ENCODE measurements at regions of chr4 and their contacts with region 1.

Region 1: GRCh38 chr4:85968945-85969819 is 390.7 kb downstream of the MAPK10 start:
- DNase-seq: no peak
- H3K4me3 ChIP-seq: no peak overlapping the region
- H3K27ac ChIP-seq: no peak overlapping the region
- H3K4me1 ChIP-seq: no peaks in the 10 kb centered on the region
- H3K27me3 ChIP-seq: no peaks in the 10 kb centered on the region
- CTCF ChIP-seq: peak; percentile 63

Region 2: DNA sequence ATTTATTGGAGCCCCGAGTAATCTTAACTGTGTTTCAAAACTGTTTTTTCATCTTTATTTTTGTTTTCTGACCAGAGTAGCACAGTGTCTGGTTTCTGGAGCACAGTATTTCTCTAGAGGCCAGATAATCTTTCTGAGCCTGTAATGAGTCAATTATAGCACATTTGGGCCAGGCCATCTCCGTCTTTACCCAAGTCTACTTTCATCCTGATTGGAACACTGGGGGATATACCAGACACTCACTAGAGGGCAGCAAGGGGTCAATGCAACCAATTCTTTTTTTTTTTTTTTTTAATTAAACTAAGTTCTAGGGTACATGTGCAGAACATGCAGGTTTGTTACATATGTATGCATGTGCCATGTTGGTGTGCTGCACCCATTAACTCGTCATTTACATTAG is 212.2 kb before region 1 on chr4:
- CTCF ChIA-PET with region 1: no interaction called
- POLR2A ChIA-PET with region 1: no interaction called
- intact Hi-C with region 1: loop called (anchors 1 kb)
- DNase-seq: no peak
- H3K4me3 ChIP-seq: no peak overlapping the region
- H3K27ac ChIP-seq: no peak overlapping the region
- H3K4me1 ChIP-seq: no peaks in the 10 kb centered on the region
- H3K27me3 ChIP-seq: no peaks in the 10 kb centered on the region
- CTCF ChIP-seq: peak; percentile 50

Region 3: DNA sequence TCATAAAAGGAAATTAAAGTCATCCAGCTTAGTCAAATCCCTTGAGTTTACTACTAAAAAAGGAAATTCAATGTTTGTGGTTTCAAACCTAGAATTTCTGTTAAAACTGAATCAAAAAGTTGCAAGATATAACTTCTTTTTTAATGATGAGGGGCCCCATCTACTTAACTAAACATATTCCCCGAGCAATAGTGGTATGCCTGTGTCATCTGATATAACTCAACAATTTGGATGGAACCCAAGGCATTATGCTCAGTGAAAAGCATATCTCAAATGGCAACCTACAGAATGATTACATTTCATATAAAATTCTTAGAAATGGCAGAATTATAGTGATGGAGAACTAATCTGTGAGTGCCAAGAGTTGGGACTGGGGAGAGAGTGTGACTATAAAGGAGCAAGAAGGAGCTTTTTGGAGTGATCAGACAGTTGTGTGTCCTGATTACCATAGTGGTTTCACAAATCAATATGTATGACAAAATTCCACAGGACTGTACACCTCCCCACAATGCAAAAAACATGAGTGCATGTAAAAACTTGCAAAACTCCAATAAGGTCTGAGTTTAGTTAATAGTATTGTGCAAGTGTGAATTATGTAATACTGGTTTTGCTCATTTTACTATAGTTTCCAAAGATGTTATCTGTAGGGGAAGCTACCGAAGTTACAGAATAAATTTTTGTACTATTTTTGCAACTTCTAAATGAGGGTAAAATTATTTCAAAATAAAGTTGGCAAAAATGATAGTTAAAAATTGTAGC is 171.0 kb before region 1 on chr4:
- CTCF ChIA-PET with region 1: interaction called, 15 read pairs
- POLR2A ChIA-PET with region 1: no interaction called
- intact Hi-C with region 1: loop called (anchors 1 kb)
- DNase-seq: no peak
- H3K4me3 ChIP-seq: no peak overlapping the region
- H3K27ac ChIP-seq: no peak overlapping the region
- H3K4me1 ChIP-seq: no peaks in the 10 kb centered on the region; the same call in 1 of the 2 replicates
- H3K27me3 ChIP-seq: no peaks in the 10 kb centered on the region
- CTCF ChIP-seq: no peak

Region 4: GRCh38 chr4:86043755-86044592 is 74.8 kb after region 1 on chr4:
- CTCF ChIA-PET with region 1: no interaction called
- POLR2A ChIA-PET with region 1: no interaction called
- intact Hi-C with region 1: loop called (anchors 5 kb)
- DNase-seq: no peak
- H3K4me3 ChIP-seq: no peak overlapping the region
- H3K27ac ChIP-seq: no peak overlapping the region
- H3K4me1 ChIP-seq: no peaks in the 10 kb centered on the region
- H3K27me3 ChIP-seq: no peaks in the 10 kb centered on the region
- CTCF ChIP-seq: peak; percentile 76